IMR-90 (cell line): ENCODE measurements at regions of chr1 and their contacts with region 1.

Region 1: GRCh38 chr1:233304489-233305102 is 9.1 kb upstream of the PCNX2 start:
- DNase-seq: peak; percentile 30
- ATAC-seq: 0 out of 2 replicates have a peak, but pooled peaks have one; percentile 67
- H3K4me3 ChIP-seq: no peak overlapping the region
- H3K27ac ChIP-seq: no peak overlapping the region
- H3K4me1 ChIP-seq: peaks cover 2% of the 10 kb centered on the region; the same call in 1 of the 2 replicates
- H3K27me3 ChIP-seq: no peaks in the 10 kb centered on the region
- CTCF ChIP-seq: peak; percentile 76
- POLR2A ChIP-seq: no peak
- RAD21 ChIP-seq: peak; percentile 74

Region 2: GRCh38 chr1:233209481-233209880 is 95.1 kb before region 1 on chr1:
- CTCF ChIA-PET with region 1: no interaction called
- POLR2A ChIA-PET with region 1: no interaction called
- dilution Hi-C with region 1: no loop called
- in situ Hi-C with region 1: no loop called
- intact Hi-C with region 1: no loop called
- DNase-seq: no peak
- ATAC-seq: no peak
- H3K4me3 ChIP-seq: no peak overlapping the region
- H3K27ac ChIP-seq: no peak overlapping the region
- H3K4me1 ChIP-seq: peaks cover 3% of the 10 kb centered on the region; the same call in 1 of the 2 replicates
- H3K27me3 ChIP-seq: no peaks in the 10 kb centered on the region
- CTCF ChIP-seq: no peak
- POLR2A ChIP-seq: no peak
- RAD21 ChIP-seq: no peak

Region 3: GRCh38 chr1:233315718-233316301 is 11.2 kb after region 1 on chr1:
- CTCF ChIA-PET with region 1: interaction called, 11 read pairs
- POLR2A ChIA-PET with region 1: no interaction called
- dilution Hi-C with region 1: no loop called
- in situ Hi-C with region 1: no loop called
- intact Hi-C with region 1: no loop called
- DNase-seq: no peak
- ATAC-seq: no peak
- H3K4me3 ChIP-seq: no peak overlapping the region
- H3K27ac ChIP-seq: no peak overlapping the region
- H3K4me1 ChIP-seq: no peaks in the 10 kb centered on the region
- H3K27me3 ChIP-seq: peaks cover 4% of the 10 kb centered on the region
- CTCF ChIP-seq: no peak
- POLR2A ChIP-seq: no peak
- RAD21 ChIP-seq: no peak

Region 4: DNA sequence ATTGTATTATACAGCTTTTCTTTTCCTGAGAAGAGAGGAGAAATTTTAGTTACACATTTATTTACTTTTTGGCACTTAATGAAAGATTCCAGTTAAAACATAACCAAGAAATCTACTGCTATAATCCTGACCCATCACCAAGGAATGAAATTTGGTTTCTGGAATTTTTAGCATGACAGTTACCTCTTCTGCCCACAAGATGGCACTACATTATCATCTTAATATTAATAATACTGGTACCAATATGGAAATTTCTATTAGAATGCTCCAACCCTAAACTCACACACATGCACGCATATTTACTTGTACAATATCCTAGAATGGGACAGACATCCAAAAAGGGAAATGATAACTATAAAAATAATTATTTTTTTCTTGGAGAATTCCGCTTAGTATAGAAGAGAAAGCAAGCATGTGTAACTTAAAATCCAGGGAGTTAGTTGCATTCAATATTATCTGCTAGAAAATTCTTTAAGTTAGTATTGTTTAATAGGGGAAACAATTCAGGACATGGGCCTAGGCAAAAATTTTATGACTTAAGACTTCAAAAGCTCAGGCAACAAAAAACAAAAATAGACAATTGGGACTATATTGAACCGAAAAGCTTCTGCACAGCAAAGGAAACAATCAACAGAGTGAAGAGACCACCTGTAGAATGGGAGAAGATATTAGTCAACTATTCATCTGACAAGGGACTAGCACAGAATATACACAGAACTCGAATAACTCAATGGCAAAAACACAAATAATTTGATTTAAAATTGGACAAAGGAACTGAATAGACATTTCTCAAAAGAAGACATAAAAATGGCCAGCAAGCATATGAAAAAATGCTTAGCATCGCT is 60.3 kb after region 1 on chr1:
- CTCF ChIA-PET with region 1: no interaction called
- POLR2A ChIA-PET with region 1: no interaction called
- dilution Hi-C with region 1: no loop called
- in situ Hi-C with region 1: no loop called
- intact Hi-C with region 1: loop called (anchors 2 kb)
- DNase-seq: peak; percentile 23
- ATAC-seq: peak; percentile 73
- H3K4me3 ChIP-seq: no peak overlapping the region
- H3K27ac ChIP-seq: no peak overlapping the region
- H3K4me1 ChIP-seq: no peaks in the 10 kb centered on the region
- H3K27me3 ChIP-seq: peaks cover 3% of the 10 kb centered on the region; the same call in 1 of the 2 replicates
- CTCF ChIP-seq: peak; percentile 63
- POLR2A ChIP-seq: no peak
- RAD21 ChIP-seq: peak; percentile 46